OCI-LY7 (cell line): ENCODE measurements at regions of chr9 and their contacts with region 1.

Region 1: DNA sequence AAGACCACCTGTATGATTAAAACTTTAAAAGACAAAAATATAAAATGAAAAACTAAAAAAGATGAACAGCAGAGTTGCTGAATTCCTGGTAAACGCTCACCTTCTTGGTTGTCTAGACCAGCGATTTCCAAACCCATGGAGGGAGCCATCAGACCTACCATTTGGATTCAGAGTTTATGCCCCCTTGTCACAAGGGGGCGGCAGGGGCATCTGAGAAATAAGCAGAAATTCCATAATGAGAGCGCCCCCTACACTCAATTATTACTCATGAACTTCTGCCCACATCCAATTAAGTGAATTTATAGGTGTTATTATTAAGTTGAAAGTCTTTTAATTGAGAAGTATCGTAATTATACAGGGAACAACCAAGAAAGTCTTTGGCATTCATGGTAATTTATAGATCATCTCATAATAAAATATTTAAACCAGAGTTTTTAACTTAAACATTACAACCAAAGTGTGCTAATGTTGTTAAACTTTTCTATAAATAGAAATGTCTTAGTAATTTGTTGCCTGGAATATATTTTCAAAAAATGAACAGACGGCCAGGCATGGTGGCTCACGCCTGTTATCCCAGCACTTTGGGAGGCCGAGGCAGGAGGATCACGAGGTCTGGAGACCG is 35.2 kb upstream of the SPATA31C2 start:
- DNase-seq: peak; percentile 82
- H3K4me3 ChIP-seq: no peak overlapping the region
- H3K27ac ChIP-seq: no peak overlapping the region
- H3K4me1 ChIP-seq: no peaks in the 10 kb centered on the region
- CTCF ChIP-seq: peak; percentile 100

Region 2: GRCh38 chr9:88578121-88579054 is 404.9 kb after region 1 on chr9:
- CTCF ChIA-PET with region 1: interaction called, 3 read pairs
- POLR2A ChIA-PET with region 1: no interaction called
- intact Hi-C with region 1: loop called (anchors 2 kb)
- DNase-seq: peak; percentile 62
- H3K4me3 ChIP-seq: no peak overlapping the region
- H3K27ac ChIP-seq: no peak overlapping the region
- H3K4me1 ChIP-seq: peaks cover 5% of the 10 kb centered on the region
- CTCF ChIP-seq: peak; percentile 97